ENCODE measurements at regions of chr2 and their contacts with region 1.

Region 1: DNA sequence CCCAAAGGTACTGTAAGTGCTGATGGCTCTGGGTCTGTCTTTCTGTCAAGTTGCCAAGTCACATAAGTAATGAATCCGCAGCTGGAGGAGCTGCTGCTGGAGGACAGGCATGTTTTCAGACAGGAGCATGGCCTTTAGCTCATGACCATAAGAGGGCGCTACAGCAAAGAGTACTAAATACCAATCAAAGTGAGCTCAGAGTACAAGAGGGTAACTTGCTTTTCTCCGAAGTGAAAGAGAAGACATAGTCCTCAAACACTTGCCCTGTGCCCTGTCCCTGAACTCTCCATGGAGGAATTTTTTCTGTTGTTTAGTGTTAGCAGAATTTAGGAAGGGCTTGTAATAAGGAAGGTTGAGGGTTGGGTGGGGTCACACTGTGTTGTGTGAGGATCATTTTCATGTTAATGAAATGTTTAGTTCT is 58.0 kb upstream of the EML6 start:
- DNase-seq: no peak
- H3K4me3 ChIP-seq: no peak overlapping the region
- H3K27ac ChIP-seq: peak overlapping the region; percentile 78 to 89 (median 84)
- H3K4me1 ChIP-seq: peaks cover 0 to 57% (median 55%) of the 10 kb centered on the region in 4 donors
- H3K27me3 ChIP-seq: no peaks in the 10 kb centered on the region
- CTCF ChIP-seq: peak in 2 of 4 experiments; percentile 19 to 33
- EP300 ChIP-seq: no peak
- POLR2A ChIP-seq: no peak

Region 2: DNA sequence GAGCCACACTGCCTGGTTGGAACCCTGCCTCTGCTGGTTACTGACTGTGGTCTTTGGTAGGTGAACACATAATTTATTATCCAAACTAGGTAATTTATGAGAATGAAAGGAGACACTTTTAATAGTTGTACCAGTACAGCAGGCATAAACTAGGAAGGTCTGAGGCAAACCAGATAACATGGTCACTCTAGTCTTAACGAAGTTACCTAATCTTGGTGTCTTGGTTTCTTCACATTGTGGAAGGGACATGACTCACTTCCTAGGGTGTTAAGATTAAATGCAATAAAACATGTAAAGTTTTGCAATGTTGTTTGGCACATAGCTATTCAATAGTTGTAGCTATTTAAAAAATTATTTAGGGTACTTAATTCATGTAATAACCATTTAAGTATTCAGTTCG is 186.0 kb before region 1 on chr2:
- intact Hi-C with region 1: loop called (anchors 5 kb)
- DNase-seq: peak; percentile 84
- H3K4me3 ChIP-seq: no peak overlapping the region
- H3K27ac ChIP-seq: peak overlapping the region; percentile 25 to 75 (median 66)
- H3K4me1 ChIP-seq: peaks cover 0 to 99% (median 92%) of the 10 kb centered on the region in 4 donors
- H3K27me3 ChIP-seq: no peaks in the 10 kb centered on the region
- CTCF ChIP-seq: no peak
- EP300 ChIP-seq: peak; percentile 51 to 93 (median 82)
- POLR2A ChIP-seq: no peak

Region 3: GRCh38 chr2:54618646-54619565 is 46.5 kb before region 1 on chr2:
- intact Hi-C with region 1: loop called (anchors 5 kb)
- DNase-seq: no peak
- H3K4me3 ChIP-seq: no peak overlapping the region
- H3K27ac ChIP-seq: peak overlapping the region; percentile 27 to 64 (median 54)
- H3K4me1 ChIP-seq: peaks cover 3 to 45% (median 30%) of the 10 kb centered on the region in 4 donors
- H3K27me3 ChIP-seq: no peaks in the 10 kb centered on the region
- CTCF ChIP-seq: no peak
- EP300 ChIP-seq: no peak
- POLR2A ChIP-seq: no peak

Region 4: DNA sequence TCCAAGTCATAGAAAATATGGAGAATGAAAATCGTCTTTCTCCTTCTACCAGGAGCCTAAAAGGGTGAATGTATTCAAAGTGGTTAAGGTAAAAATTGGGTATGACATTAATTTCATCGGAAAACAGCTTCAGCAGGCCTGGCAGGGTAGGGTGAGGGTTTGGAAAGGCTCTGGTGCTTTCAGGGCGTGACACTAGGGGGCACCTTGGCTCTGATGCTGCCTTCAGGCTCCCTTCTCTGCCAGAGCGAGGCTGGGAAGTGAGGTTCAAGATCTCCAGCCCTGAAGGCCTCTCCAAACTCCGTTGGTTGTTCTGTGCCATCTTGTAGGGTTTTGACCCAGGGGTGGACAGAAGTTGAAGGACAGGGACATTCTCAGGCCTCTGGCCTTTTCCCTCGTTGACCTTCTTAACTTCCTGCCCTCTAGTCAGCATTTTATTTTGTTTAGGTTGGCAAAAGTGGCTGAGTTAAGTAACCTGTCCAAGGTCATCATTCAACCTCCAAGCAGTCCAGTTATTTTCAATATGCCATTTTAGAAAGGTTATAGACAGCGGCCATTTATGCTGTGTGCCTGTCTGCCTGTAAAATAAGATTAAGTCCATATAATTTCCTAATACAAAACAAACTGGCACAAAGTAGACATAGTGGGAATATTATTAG is 98.3 kb after region 1 on chr2:
- intact Hi-C with region 1: no loop called
- DNase-seq: no peak
- H3K4me3 ChIP-seq: no peak overlapping the region
- H3K27ac ChIP-seq: no peak overlapping the region
- H3K4me1 ChIP-seq: no peaks in the 10 kb centered on the region
- H3K27me3 ChIP-seq: no peaks in the 10 kb centered on the region
- CTCF ChIP-seq: no peak
- EP300 ChIP-seq: no peak
- POLR2A ChIP-seq: no peak

Measured in sigmoid colon (tissue), 7 donors.